Posterior vena cava (tissue), 2 donors: ENCODE measurements at regions of chr2 and their contacts with region 1.

Region 1: DNA sequence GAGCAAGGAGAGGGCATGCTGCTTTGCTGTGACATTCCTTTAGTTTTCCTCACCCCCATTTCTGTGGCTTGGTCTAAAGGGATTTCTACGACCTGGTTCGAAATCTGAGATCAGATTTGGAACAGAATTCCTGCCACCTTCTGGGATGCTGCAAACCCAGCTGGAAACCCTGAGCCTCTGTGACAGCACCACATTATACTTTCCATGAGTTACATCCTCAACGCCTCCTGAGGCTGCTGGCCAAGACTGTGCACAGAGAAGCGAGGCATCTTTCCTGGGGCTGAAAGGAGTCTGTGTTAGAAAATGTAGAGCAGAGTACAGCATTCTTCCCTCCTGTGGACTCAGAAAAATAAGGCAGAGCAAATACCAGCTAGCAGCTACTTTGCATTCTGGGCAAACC is 138.1 kb upstream of the CHAC2 start:
- DNase-seq: no peak

Region 2: DNA sequence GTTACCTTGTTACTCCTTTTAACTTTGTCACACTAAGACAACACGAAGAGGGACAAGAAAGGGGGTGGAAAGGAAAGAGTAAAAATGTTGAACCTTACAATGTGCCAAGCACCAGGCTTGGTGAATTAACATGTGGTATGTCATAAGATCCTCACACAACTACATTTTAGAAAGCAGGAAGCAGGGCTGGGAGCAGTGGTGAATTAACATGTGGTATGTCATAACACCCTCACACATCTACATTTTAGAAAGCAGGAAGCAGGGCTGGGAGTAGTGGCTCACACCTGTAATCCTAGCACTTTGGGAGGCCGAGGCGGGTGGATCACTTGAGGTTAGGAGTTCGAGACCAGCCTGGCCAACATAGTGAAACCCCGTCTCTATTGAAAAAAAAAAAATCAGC is 21.2 kb before region 1 on chr2:
- intact Hi-C with region 1: loop called in 1 of 2 experiments (anchors 1 kb)
- DNase-seq: no peak

Region 3: DNA sequence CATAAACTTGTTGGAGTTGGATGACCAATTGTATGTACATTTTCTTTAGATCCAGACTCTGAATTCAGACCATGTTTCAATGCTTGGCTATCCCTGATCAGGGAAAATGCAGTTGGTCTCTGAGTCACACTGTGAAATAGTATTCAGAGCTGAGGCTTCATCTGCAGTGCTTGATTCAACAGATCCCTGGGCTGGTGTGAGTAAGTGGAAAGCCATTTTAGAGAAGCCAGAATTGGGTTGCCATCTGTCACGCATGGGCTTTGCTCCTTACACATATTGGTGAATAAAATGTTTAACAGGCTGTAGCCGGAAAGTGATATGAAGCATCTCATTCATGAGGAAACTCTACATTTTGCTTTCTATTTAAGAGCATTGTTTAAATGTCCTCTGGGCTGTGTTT is 435.9 kb after region 1 on chr2:
- intact Hi-C with region 1: no loop called
- DNase-seq: no peak